Activated CD4-positive, alpha-beta memory T cell treated with anti-CD3 and anti-CD28 coated beads for 36 hours (primary cell): ENCODE measurements at regions of chr22 and their contacts with region 1.

Region 1: DNA sequence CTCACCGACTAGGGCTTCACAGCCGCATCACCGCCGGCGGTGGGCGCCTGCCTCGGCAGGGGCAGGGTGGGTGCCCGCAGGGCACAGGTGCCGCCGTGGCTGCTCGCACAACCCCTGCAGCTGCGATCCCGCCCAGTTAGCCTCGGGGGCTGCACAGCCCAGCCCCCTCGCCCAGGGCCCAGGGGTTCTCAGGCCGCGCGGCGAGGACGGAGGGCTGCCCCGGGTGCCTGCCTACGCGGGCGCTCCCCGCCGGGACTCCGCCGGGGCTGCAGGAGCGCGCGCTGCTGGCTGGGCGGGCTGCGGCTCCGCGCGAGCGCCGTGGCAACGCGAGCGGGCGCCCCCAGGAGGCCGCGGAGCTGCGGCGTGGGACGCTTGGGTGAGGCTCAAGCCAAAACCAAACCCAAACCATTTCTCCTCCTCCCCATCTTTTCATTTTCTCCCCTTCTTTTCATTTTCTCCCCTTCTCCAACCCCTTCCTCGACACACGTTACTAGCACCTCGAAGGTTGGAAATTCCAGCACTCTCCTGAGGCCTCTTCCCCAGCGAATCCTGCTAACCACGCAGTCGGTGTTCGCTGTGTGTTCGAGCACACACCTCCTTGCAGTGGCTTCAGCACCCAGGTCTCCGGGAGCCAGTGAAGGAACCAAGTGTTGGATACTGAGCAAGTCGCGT is at the start of gene MICAL3:
- DNase-seq: peak; percentile 74
- H3K4me3 Mint-ChIP-seq: peak within 1 kb of the TSS; percentile 80
- H3K27ac Mint-ChIP-seq: no peak within 1 kb of the TSS
- H3K4me1 Mint-ChIP-seq: peaks cover 11% of the 10 kb centered on the region
- H3K27me3 Mint-ChIP-seq: peaks cover 25% of the 10 kb centered on the region
- total RNA-seq, gene MICAL3: 29.7 to 37.2 TPM

Region 2: GRCh38 chr22:17830043-17830961 is 194.1 kb before region 1 on chr22:
- CTCF ChIA-PET with region 1: interaction called, 37 read pairs
- POLR2A ChIA-PET with region 1: no interaction called
- intact Hi-C with region 1: loop called (anchors 1 kb)
- DNase-seq: peak; percentile 88
- H3K4me3 Mint-ChIP-seq: no peak overlapping the region
- H3K27ac Mint-ChIP-seq: no peak overlapping the region
- H3K4me1 Mint-ChIP-seq: no peaks in the 10 kb centered on the region
- H3K27me3 Mint-ChIP-seq: no peaks in the 10 kb centered on the region

Region 3: DNA sequence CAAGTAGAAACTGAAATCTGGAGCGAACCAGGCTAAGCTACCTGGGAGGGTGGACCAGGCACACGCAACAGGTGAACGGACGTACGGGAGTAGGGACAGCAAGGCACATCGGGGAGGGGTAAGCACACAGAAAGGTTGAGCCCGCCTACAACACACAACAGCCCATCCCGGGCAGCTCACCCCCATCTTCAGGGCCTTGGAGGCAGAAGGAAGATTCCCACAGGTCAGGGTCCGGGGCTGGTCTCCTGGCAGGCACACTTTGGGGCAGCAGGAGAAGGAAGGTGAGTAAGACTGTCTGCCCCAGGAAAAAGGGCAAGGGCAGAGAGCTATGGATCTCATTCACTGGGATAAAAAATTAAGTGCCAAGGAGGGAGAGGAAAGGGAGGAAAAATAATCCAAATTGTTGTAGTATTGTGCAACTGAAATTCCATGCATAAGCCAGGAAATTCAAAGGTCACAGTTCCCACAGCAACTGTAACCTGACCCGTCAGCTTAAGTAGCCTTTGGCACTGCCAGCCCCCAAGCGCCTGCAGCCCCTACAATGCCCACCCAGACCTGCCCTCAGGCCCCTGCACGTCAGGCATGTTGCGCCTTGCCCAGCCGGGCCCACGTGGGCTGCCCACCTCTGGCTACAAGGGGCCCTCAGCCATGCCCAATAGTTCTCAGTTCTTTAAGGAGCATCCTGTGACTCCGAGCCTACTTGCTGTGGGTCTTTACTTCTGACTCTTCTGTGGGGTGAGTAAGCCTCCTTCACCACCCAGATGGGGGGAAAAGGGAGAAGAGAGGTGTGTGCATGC is 51.8 kb before region 1 on chr22:
- CTCF ChIA-PET with region 1: no interaction called
- POLR2A ChIA-PET with region 1: no interaction called
- intact Hi-C with region 1: loop called (anchors 10 kb)
- DNase-seq: no peak
- H3K4me3 Mint-ChIP-seq: no peak overlapping the region
- H3K27ac Mint-ChIP-seq: no peak overlapping the region
- H3K4me1 Mint-ChIP-seq: peaks cover 7% of the 10 kb centered on the region
- H3K27me3 Mint-ChIP-seq: no peaks in the 10 kb centered on the region

Region 4: DNA sequence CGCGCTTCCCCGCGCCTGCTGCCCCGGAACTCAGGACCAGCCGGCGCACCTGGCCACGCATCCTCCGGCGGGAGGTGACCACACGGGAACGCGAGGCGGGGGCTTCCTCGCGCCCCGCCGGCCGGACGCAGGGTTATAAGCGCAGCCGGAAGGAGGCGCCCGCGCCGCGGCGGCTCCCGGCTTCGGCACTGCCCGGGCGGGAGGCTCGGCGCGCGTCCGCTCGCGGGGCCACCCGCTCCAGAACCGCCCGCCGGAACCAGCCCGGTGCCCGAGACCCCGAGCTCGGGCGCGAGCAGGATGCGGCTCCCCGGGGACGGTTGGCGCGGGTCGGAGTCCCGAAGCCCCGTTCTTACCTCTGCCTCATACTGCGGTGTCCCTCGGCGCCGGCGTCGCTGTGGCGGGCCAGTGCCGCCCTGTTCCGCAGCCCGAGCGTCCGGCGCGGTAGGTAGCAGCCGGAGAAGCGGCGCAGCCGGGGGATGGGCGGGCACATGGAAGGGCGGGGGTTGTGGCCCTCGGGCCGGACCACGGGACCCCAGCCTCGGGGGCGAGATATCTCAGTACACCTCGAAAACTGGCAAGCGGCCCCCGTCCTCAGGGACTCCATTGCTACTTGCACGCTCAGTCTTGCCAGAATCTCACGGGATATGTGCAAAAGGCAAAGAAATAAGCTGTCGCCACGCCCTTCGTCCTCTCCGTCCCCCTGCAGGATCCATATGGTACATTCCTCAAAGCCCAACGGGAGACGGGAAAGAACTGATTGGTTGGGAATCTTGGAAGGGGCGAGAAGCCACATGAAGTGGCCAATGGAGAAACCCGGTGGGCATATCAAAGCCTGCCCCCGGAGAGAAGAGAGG is 23.1 kb before region 1 on chr22:
- CTCF ChIA-PET with region 1: interaction called, 4 read pairs
- POLR2A ChIA-PET with region 1: no interaction called
- intact Hi-C with region 1: loop called (anchors 2 kb)
- DNase-seq: peak; percentile 86
- H3K4me3 Mint-ChIP-seq: peak overlapping the region; percentile 80
- H3K27ac Mint-ChIP-seq: peak overlapping the region; percentile 94
- H3K4me1 Mint-ChIP-seq: peaks cover 44% of the 10 kb centered on the region
- H3K27me3 Mint-ChIP-seq: peaks cover 2% of the 10 kb centered on the region

Region 5: DNA sequence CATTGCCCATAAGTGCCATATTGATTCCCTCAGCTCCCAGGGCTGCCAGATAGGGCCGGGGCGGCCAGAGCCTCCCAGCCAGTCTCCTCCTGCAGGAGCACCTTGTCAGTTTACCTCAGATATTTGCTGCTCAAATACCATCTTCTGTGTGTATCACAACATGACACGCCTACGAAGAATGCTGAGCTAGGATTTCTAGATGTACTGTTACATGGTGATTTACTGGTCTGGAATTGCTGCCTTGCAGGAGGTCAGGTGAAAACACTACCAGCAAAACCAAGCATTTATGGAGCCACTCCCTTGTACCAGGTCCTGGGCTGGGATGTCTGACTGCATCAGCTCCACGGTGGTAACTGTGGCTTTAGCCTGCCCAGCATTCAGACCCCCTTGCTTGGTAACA is 11.9 kb before region 1 on chr22:
- CTCF ChIA-PET with region 1: interaction called, 14 read pairs
- POLR2A ChIA-PET with region 1: interaction called, 4 read pairs
- intact Hi-C with region 1: no loop called
- DNase-seq: no peak
- H3K4me3 Mint-ChIP-seq: no peak overlapping the region
- H3K27ac Mint-ChIP-seq: no peak overlapping the region
- H3K4me1 Mint-ChIP-seq: no peaks in the 10 kb centered on the region
- H3K27me3 Mint-ChIP-seq: peaks cover 2% of the 10 kb centered on the region